Gastrocnemius medialis (tissue), 4 donors: ENCODE measurements at regions of chr14 and their contacts with region 1.

Region 1: GRCh38 chr14:67619446-67620216 is at the start of gene ARG2:
- DNase-seq: peak; percentile 96
- ATAC-seq: peak; percentile 59 to 76
- H3K4me3 ChIP-seq: peak within 1 kb of the TSS; percentile 69 to 89 (median 78)
- H3K27ac ChIP-seq: peak within 1 kb of the TSS; percentile 81 to 97 (median 90)
- H3K4me1 ChIP-seq: peaks cover 21 to 40% of the 10 kb centered on the region in 2 donors
- H3K27me3 ChIP-seq: no peaks in the 10 kb centered on the region
- CTCF ChIP-seq: peak in 1 of 5 experiments; percentile 16
- POLR2A ChIP-seq: peak; percentile 94 to 98
- total RNA-seq, gene ARG2: 4.0 to 662 (median 152) TPM

Region 2: DNA sequence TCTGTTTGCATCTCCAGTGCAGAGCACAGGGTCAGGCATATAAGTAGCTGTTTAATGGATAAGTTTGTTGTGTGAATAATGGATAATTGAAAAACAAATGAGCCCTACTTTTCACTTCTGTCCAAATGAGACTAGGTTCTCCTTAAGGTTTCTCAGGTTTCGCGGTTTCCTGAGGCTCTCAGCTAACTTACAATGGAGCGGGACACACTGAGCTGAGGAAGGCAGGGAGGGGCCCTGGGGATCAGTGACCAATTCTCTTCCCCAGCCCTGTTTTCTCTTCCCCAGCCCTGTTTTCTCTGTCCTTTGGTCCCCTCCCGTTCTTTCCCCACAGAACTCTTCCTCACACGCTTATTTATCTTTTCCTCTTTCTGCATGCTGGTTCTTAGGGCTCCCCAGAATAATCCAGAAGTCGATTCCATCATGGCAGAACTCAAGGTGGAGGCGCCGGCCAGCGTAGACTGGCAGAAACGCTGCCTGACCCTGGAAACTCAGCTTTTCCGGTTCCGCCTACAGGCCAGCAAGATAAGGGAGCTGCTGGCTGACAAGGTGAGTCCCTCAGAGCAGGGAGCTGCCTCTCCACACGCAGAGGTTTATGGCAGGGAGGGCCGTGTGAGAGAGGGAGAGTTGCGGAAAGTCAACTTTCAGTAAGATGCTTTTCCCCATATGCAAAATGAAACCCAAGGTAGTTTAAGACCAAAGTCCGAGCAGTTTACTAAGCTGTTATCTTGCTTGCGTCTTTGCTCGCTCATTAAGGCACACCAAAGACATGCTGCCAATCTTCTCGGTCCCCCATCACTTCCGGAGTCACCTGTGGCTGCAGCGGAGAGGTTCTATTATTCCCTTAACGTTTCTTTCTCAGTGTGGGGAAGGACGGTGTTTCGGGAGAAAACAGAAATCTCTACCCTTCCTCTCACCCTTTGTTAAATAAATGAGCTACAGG is 77.9 kb before region 1 on chr14:
- in situ Hi-C with region 1: no loop called
- intact Hi-C with region 1: no loop called
- DNase-seq: no peak
- ATAC-seq: no peak
- H3K4me3 ChIP-seq: no peak overlapping the region
- H3K27ac ChIP-seq: no peak overlapping the region
- H3K4me1 ChIP-seq: peaks cover 0 to 10% of the 10 kb centered on the region in 2 donors
- H3K27me3 ChIP-seq: no peaks in the 10 kb centered on the region
- CTCF ChIP-seq: no peak
- POLR2A ChIP-seq: no peak

Region 3: GRCh38 chr14:67636361-67636919 is 16.8 kb after region 1 on chr14:
- in situ Hi-C with region 1: no loop called
- intact Hi-C with region 1: loop called (anchors 1 kb)
- DNase-seq: peak; percentile 31 to 59
- ATAC-seq: peak; percentile 94 to 97
- H3K4me3 ChIP-seq: no peak overlapping the region
- H3K27ac ChIP-seq: peak overlapping the region; percentile 63 to 89 (median 80)
- H3K4me1 ChIP-seq: peaks cover 10 to 35% of the 10 kb centered on the region in 2 donors
- H3K27me3 ChIP-seq: no peaks in the 10 kb centered on the region
- CTCF ChIP-seq: no peak
- POLR2A ChIP-seq: peak in 1 of 2 donors; percentile 73

Region 4: GRCh38 chr14:67666750-67667449 is 47.3 kb after region 1 on chr14:
- in situ Hi-C with region 1: loop called (anchors 5 to 10 kb)
- intact Hi-C with region 1: loop called (anchors 1 kb)
- DNase-seq: no peak
- ATAC-seq: peak; percentile 66 to 82
- H3K4me3 ChIP-seq: no peak overlapping the region
- H3K27ac ChIP-seq: no peak overlapping the region
- H3K4me1 ChIP-seq: peaks cover 13 to 25% of the 10 kb centered on the region in 2 donors
- H3K27me3 ChIP-seq: no peaks in the 10 kb centered on the region
- CTCF ChIP-seq: peak; percentile 41 to 68 (median 57)
- POLR2A ChIP-seq: no peak

Region 5: DNA sequence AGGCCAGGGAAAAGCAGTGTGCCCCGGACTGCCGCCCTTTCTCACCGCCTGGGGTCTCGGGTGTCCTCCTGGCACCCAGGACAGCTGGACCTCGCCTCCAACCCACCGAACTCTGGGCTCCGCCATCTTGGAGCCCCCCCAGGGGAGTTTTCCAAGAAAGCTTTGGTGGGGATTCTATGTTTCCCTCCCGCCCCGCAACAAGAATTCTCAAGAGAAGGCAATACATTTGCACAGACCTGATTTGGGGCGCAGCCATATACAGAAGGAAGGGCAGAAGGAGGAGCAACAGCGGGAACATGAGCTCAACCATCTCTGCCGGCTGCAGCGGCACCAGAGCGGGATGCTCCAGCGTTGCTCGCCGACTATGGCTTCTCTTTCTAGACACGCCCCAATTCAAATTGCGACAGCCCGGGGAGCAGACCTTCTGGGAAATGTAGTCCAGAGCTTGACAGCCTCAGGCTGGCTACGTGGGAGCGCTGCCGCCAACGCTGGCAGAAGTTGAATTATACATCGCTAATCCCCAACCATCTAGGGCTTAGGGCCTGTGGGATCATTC is 75.8 kb after region 1 on chr14 and contains the start of gene RDH11:
- in situ Hi-C with region 1: loop called in 2 of 4 experiments (anchors 5 to 10 kb)
- intact Hi-C with region 1: loop called (anchors 2 kb)
- DNase-seq: peak; percentile 73 to 77
- ATAC-seq: peak; percentile 100
- H3K4me3 ChIP-seq: peak within 1 kb of the TSS; percentile 74 to 87 (median 82)
- H3K27ac ChIP-seq: peak within 1 kb of the TSS; percentile 61 to 69 (median 66)
- H3K4me1 ChIP-seq: peaks cover 6% of the 10 kb centered on the region in 2 donors
- H3K27me3 ChIP-seq: no peaks in the 10 kb centered on the region
- CTCF ChIP-seq: no peak
- POLR2A ChIP-seq: peak; percentile 45 to 63
- total RNA-seq, gene RDH11: 6.6 to 8.3 (median 7.5) TPM

Region 6: DNA sequence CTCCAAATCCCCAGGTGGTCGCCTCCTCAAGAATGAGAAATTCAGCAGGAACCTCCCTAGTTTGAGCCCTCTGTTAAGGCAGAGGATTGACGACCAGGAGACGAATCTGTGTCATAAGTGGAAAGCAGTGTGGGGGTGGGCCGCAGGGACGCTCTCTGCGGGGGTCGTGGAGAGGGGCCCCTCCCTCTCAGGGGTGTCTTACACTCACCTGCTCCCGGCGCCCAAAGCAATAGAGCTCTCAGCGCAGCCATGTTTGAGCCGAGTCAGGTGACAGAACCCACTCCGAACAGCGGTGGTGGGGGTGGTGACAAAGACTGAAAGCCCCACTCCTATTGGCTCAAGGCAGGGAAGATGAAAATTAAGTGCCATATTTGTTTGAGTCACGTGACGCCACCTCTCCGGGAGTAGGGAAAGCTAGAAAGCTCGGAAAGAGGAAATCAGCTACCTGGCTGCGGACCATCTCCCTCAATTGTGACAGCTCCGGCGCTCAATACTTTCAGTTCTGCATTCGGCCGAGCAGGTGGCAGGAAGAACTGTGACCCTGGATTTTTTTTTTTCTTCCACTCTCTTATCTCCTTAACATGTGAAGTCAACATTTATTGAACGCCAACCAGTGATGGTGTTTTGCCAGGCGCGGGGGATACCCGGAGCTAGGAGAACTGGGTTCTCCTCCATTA is 196.8 kb after region 1 on chr14 and contains the start of gene ZFYVE26:
- in situ Hi-C with region 1: no loop called
- intact Hi-C with region 1: loop called (anchors 10 kb)
- DNase-seq: peak; percentile 94
- ATAC-seq: peak; percentile 96 to 99
- H3K4me3 ChIP-seq: peak within 1 kb of the TSS; percentile 72 to 97 (median 86)
- H3K27ac ChIP-seq: peak within 1 kb of the TSS; percentile 84 to 90 (median 86)
- H3K4me1 ChIP-seq: peaks cover 21 to 35% of the 10 kb centered on the region in 2 donors
- H3K27me3 ChIP-seq: no peaks in the 10 kb centered on the region
- CTCF ChIP-seq: peak in 1 of 5 experiments; percentile 40
- POLR2A ChIP-seq: peak; percentile 15 to 45
- total RNA-seq, gene ZFYVE26: 16.3 to 26.3 (median 17.6) TPM

Region 7: GRCh38 chr14:67919259-67920032 is 299.8 kb after region 1 on chr14:
- in situ Hi-C with region 1: no loop called
- intact Hi-C with region 1: no loop called
- DNase-seq: no peak
- ATAC-seq: no peak
- H3K4me3 ChIP-seq: no peak overlapping the region
- H3K27ac ChIP-seq: no peak overlapping the region
- H3K4me1 ChIP-seq: no peaks in the 10 kb centered on the region
- H3K27me3 ChIP-seq: no peaks in the 10 kb centered on the region
- CTCF ChIP-seq: no peak
- POLR2A ChIP-seq: no peak

Region 8: DNA sequence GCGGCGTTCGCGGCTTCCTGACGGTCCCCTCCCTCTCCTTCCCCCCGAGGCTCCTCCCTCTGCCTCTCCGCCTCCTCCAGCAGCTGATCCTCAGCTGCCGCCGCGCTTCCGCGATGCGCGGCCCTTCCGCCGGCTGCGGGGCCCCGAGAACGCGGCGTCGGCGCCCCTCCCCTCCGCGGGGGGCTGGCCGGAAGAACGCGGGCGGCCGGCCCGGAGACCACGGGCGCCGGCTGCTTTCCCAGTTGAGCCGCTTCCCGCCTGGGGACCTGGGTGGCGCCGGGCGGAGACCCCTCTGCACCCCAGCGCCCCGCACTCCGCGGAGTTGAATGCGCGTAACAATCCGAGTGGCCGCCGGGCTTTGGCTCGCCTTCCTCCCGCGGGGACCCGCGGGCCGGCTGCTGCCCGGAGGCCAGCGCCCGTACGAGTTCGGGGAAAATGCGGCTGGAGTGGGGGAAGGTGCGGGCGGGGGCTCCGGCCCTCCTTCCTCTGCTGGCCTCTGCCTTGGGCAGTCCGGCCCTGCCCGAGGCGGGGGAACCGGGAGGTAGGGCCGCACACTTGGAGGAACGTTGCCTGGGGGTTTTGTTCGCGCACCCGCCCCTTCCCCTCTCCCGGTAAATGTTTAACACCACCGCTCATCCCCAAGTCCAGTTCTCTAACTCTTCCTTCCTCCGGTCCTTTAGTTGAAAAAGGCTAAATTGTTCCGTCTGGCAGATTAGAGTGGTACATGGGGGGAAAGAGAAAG is 1533.7 kb after region 1 on chr14:
- in situ Hi-C with region 1: no loop called
- intact Hi-C with region 1: loop called (anchors 5 kb)
- DNase-seq: peak; percentile 94 to 95
- ATAC-seq: peak; percentile 80 to 91
- H3K4me3 ChIP-seq: peak overlapping the region; percentile 76 to 99 (median 88)
- H3K27ac ChIP-seq: peak overlapping the region; percentile 92 to 98 (median 98)
- H3K4me1 ChIP-seq: peaks cover 21 to 23% of the 10 kb centered on the region in 2 donors
- H3K27me3 ChIP-seq: no peaks in the 10 kb centered on the region
- CTCF ChIP-seq: peak in 2 of 5 experiments; percentile 24 to 34
- POLR2A ChIP-seq: peak; percentile 89 to 94